Naive thymus-derived CD8-positive, alpha-beta T cell (primary cell): ENCODE measurements at regions of chr4 and their contacts with region 1.

Region 1: GRCh38 chr4:6909073-6909965 is at the start of gene TBC1D14:
- DNase-seq: peak; percentile 76 to 93 (median 88)
- ATAC-seq: peak; percentile 85 to 87
- H3K4me3 Mint-ChIP-seq: peak within 1 kb of the TSS; percentile 86 to 95 (median 94)
- H3K27ac Mint-ChIP-seq: peak within 1 kb of the TSS; percentile 87 to 95 (median 93)
- H3K4me1 Mint-ChIP-seq: peaks cover 26 to 57% (median 52%) of the 10 kb centered on the region in 4 donors
- H3K27me3 Mint-ChIP-seq: no peaks in the 10 kb centered on the region
- polyA plus RNA-seq, gene TBC1D14: 34.8 to 47.0 (median 36.7) TPM

Region 2: DNA sequence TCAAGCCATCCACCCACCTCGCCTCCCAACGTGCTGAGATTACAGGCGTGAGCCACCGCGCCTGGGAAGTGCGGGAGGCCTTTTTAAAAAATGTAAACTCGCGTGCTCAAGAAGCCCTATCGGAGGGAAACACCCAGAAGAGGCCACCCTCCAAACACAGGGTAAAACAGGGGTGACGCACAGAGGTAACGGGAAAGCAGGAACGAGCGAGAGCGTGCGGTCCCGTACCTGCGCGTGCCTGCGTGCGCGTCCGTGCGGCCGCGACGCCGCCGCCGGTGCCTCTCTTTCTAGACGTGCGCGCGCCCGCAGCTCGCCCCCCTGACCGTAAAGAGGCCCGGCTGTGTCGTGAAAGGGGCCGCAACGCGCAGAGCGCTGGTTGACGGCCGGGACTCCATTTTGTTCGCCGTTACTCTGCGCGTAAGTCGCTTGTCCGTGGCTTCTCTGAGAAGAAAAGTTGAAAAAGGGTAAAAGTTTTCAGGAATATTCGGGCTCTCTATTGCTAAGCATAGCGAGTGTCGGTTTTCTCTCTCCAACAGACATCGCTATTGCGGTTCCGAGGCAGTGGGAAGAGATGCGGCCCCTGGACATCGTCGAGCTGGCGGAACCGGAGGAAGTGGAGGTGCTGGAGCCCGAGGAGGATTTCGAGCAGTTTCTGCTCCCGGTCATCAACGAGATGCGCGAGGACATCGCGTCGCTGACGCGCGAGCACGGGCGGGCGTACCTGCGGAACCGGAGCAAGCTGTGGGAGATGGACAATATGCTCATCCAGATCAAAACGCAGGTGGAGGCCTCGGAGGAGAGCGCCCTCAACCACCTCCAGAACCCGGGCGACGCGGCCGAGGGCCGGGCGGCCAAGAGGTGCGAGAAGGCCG is 268.8 kb before region 1 on chr4 and contains the start of gene MRFAP1:
- POLR2A ChIA-PET with region 1: interaction called, 11 read pairs
- DNase-seq: peak; percentile 91 to 97 (median 94)
- ATAC-seq: peak; percentile 84 to 89
- H3K4me3 Mint-ChIP-seq: peak within 1 kb of the TSS; percentile 97 to 100 (median 99)
- H3K27ac Mint-ChIP-seq: peak within 1 kb of the TSS; percentile 98 to 100 (median 99)
- H3K4me1 Mint-ChIP-seq: peaks cover 25 to 45% (median 41%) of the 10 kb centered on the region in 4 donors
- H3K27me3 Mint-ChIP-seq: no peaks in the 10 kb centered on the region
- polyA plus RNA-seq, gene MRFAP1: 141 to 186 (median 155) TPM

Region 3: GRCh38 chr4:6898763-6899162 is 10.6 kb before region 1 on chr4:
- POLR2A ChIA-PET with region 1: interaction called, 41 read pairs
- DNase-seq: no peak
- ATAC-seq: peak; percentile 33 to 35
- H3K4me3 Mint-ChIP-seq: peak overlapping the region in 9 of 10 donors; percentile 55 to 75 (median 69)
- H3K27ac Mint-ChIP-seq: peak overlapping the region; percentile 86 to 97 (median 93)
- H3K4me1 Mint-ChIP-seq: peaks cover 14 to 37% (median 26%) of the 10 kb centered on the region in 4 donors
- H3K27me3 Mint-ChIP-seq: no peaks in the 10 kb centered on the region

Region 4: DNA sequence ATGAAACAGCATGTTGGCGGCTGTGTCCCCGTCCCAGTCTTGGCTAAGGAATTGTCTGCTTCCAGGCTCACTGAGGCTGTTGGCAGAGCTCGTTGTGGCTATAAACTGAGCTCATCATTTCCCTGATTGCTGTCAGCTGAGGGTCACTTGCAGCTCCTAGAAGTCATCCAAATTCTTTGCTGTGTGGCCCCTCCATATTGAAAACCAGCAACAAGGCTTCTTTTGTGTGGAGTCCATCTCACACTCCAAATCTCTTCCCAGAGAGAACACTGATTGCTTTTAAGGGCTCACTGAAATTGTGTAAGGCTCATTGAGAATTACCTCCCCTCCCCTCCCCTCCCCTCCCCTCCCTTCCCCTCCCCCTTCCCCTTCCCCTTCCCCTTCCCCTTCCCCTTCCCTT is 23.6 kb after region 1 on chr4:
- POLR2A ChIA-PET with region 1: interaction called, 14 read pairs
- DNase-seq: no peak
- ATAC-seq: no peak
- H3K4me3 Mint-ChIP-seq: no peak overlapping the region
- H3K27ac Mint-ChIP-seq: peak overlapping the region in 1 of 10 donors; percentile 49
- H3K4me1 Mint-ChIP-seq: peaks cover 45 to 78% (median 71%) of the 10 kb centered on the region in 4 donors
- H3K27me3 Mint-ChIP-seq: no peaks in the 10 kb centered on the region

Region 5: DNA sequence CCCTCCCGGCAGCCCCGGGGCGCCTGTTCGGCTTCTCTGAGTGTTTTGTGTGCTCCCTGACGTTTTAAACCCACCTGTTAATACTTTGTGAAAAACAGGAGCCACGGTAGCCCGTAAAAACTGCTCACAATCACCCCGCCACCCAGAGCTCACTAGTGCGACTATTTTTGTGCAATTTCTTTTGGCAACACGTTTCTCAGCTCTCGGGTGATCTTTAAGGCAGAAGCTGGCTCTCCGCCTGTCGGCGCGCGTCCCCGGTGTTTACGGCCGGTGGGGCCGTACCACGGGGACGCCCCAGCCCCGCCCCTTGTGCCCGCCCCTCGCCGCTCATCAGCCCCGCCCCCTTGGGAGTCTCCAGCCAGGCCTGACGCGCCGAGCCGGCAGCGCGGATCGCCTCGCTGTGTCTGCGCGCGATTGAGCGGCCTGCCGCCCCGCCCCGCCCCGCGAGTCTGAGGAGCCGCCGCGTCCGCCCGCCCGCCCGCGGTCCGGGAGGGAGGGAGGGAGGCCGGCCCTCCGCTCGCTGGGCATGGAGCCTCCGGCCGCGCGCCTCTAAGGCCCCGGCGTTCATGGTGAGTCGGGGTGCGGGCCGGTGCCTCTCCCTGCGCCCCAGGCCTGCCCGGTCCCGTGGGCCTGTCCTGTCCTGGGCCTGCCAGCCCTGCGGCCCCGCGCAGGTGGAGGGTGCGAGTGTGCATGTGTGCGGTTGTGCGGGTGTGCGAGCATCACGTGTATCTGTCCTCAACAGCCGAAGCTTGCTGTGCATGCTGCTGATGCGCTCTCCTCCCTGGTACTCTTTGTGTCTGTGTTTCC is 77.7 kb after region 1 on chr4:
- POLR2A ChIA-PET with region 1: interaction called, 66 read pairs
- DNase-seq: peak; percentile 86 to 97 (median 92)
- ATAC-seq: peak; percentile 88 to 90
- H3K4me3 Mint-ChIP-seq: peak overlapping the region; percentile 93 to 100 (median 97)
- H3K27ac Mint-ChIP-seq: peak overlapping the region; percentile 94 to 99 (median 97)
- H3K4me1 Mint-ChIP-seq: peaks cover 26 to 84% (median 82%) of the 10 kb centered on the region in 4 donors
- H3K27me3 Mint-ChIP-seq: no peaks in the 10 kb centered on the region

Region 6: DNA sequence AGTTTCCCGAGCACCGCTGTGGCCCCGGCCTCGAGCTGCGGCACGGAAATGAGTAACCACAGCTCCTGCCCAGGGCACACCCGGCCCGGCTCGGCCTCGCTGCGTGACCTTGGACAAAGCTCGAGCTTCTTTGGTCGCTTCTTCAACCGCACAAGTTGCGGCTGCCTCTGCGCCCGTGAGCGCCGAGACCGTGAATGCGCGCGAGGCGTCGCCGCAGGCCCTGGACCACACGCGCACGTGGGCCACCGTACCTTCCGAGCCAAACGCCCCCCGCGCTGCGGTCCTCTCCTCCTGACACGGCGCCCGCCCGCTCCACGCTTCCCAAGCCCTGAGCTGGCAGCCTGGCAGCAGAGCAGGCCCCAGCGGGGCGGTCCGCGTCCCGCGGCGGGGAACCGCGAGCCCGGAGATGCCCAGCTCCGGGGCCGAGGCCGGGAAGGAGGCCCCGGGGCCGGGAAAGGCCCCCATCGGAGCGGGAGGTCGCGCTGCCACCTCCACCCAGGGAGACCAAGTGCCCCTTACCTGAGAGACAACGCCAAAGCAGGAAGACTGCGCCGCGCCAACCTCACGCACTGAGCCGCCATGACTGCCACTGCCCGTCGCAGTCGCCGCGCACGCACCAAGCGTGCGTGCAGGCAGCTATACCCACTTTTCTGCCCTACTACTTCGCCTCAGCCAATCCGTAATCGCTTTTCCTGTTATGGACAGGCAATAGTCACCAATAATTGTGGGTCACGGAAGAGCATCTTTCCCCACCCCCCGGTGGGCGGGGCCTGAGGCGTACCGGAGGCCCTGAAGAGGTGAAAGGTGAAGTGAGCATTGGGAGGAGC is 158.3 kb after region 1 on chr4 and contains the start of gene GRPEL1:
- POLR2A ChIA-PET with region 1: interaction called, 46 read pairs
- DNase-seq: peak; percentile 37 to 100 (median 100)
- ATAC-seq: peak; percentile 91 to 92
- H3K4me3 Mint-ChIP-seq: peak within 1 kb of the TSS; percentile 85 to 98 (median 96)
- H3K27ac Mint-ChIP-seq: peak within 1 kb of the TSS; percentile 91 to 98 (median 96)
- H3K4me1 Mint-ChIP-seq: peaks cover 18 to 59% (median 52%) of the 10 kb centered on the region in 4 donors
- H3K27me3 Mint-ChIP-seq: peaks cover 0 to 3% (median 0%) of the 10 kb centered on the region in 5 donors
- polyA plus RNA-seq, gene GRPEL1: 31.4 to 47.6 (median 36.3) TPM